Left cardiac atrium (tissue), 4 donors: ENCODE measurements at regions of chr2 and their contacts with region 1.

Region 1: DNA sequence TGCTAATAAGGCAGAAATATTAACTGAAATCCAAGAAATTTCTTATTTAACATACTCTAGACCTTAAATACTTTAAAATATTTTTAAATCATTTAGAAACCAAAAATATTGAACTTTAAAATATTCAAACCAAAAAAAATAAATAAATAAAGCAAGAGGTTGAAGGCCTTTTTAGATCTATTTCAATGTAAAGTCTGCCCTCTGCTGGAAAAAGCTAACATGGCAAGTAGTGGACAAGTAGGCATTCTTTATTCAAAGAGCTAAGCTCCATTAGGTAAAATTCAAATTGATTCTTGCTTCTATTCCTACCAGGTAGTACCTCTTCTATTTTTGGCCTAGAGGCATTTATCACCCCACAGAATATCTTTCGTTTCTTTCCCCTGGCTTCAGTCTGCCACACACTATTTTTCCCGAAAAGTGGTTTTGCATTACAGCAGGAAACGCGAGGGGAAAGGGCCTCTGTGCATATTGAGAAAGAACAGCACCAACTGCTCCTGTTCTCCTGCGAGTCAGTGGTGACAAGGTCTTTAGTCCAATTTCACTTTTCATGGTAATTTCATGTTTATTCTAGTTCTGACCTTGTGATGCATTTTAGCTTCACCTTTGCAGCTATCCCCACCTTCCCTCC is 20.4 kb downstream of the IFIH1 start:
- DNase-seq: peak; percentile 34
- ATAC-seq: peak; percentile 23 to 56

Region 2: GRCh38 chr2:162113776-162114168 is 184.3 kb before region 1 on chr2:
- intact Hi-C with region 1: no loop called
- DNase-seq: peak; percentile 25
- ATAC-seq: peak; percentile 80 to 93

Region 3: DNA sequence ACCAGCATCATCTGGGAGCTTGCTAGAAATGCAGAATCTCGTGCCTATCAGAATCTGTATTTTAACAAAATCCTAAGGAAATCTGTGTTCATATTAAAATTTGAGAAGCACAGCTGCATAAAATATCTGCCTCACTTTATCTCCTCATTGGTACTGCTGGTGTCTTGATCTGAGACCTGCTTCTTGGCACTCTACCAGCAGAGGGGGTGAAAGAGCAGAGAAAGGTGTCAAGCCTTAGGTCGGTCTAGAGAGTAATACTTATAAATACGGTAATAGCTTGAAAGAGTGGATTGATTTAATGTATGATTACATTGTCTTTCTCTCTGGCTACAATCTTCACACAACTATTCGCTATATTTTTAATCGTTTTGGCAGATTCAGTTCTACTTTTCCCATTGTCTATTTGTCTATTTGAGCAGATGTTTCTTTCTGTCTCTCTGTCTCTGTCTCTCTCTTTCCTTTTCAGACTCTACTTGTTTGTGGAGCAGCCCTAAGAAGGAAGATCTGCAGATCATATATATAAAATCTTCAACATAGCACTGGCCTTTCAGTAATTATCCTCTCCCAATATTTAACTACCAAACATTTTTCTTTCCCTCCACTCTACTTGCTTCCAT is 144.3 kb before region 1 on chr2:
- intact Hi-C with region 1: loop called in 1 of 2 experiments (anchors 10 kb)
- DNase-seq: peak; percentile 22
- ATAC-seq: no peak

Region 4: GRCh38 chr2:162221064-162221463 is 77.0 kb before region 1 on chr2:
- intact Hi-C with region 1: loop called (anchors 1 to 5 kb)
- DNase-seq: peak; percentile 61
- ATAC-seq: peak; percentile 78 to 81

Region 5: DNA sequence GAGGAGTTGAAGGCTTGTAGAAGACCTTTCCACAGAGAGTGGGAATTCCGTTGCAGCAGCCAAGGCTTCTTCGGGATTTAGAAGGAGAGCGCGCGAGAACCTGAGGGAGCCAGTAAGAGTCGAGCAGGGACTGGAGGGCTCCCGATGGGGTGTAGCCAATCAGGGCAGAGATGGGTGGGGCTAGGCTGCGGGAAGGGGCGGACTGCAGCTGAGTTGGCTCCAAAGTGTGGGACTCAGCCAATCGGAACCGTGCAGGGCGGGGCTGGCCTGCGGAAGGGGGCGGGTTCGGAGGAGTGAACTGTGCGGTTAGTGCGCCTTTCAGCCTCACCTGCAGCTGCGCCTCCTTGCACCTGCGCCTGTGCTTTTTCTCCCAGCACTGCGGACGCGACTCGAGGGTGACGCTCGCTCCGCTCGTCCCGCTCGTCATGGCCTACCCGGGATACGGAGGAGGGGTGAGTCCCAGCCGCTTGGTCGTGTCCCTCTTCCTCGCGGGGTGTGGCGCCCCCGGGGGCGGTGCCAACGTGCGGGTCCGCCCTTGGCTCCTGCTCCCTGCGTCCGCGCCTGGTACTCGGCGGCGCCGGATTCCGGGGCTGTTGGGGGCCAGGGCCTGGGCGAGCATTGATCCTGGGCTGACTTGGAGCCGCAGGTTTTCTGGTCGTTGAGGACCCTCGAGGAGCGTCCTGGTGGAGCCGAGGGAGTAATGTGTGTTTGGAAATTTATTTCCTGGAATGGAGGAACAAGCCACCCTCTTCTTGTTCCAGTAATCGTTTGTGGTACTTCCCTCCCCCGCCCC is 46.0 kb after region 1 on chr2 and contains the start of gene GCA:
- intact Hi-C with region 1: no loop called
- DNase-seq: peak; percentile 98
- ATAC-seq: peak; percentile 100
- total RNA-seq, gene GCA: 17.5 to 18.4 TPM